ENCODE measurements at regions of chr20 and their contacts with region 1.

Region 1: DNA sequence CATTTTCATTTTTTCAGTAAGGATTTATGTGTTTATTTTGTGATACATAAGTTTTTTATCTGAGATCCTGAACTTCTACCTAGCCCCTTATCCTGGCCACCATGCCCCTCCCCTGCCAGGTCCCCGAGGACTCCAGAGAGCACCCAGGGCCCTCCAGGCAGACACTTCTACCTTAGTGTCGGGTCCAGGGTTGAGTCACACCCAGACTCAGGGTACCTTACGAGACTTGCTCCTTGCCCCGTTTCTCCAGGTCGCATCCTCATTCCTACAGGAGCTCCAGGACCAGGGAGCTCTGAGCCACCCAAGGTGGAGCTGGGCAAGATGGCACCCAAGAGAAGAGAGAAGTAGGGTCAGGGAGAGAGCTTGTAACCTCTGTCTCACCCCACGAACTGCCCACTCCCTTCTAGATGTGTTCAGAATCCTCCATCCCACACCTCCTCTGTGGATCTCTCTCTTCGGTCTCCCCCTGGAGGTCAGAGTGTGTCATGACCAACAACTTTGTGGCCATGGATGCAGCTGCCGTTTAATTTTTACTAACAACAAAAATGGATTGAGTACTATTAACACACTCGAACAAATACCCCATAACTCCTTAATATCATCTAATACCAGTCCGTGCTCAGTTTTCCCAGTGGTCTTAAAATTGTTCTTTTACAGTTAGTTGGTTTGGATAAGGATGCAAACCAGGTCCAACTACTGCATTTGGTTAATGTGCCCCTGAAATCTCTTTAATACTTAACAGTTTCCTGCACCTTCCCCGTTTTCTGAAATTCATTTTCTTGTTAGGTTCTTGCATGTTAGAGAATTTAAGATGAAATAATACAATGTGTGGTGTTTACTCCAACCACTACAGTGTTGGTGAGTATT is 130.6 kb upstream of the INSM1 start:
- DNase-seq: peak; percentile 24 to 51 (median 43)
- H3K4me3 ChIP-seq: no peak overlapping the region
- H3K4me3 Mint-ChIP-seq: no peak overlapping the region
- H3K27ac ChIP-seq: no peak overlapping the region
- H3K27ac Mint-ChIP-seq: no peak overlapping the region
- H3K4me1 ChIP-seq: no peaks in the 10 kb centered on the region
- H3K4me1 Mint-ChIP-seq: peaks cover 4% of the 10 kb centered on the region
- H3K27me3 ChIP-seq: no peaks in the 10 kb centered on the region
- H3K27me3 Mint-ChIP-seq: peaks cover 5 to 7% (median 7%) of the 10 kb centered on the region in 3 donors
- CTCF ChIP-seq: peak; percentile 82

Region 2: DNA sequence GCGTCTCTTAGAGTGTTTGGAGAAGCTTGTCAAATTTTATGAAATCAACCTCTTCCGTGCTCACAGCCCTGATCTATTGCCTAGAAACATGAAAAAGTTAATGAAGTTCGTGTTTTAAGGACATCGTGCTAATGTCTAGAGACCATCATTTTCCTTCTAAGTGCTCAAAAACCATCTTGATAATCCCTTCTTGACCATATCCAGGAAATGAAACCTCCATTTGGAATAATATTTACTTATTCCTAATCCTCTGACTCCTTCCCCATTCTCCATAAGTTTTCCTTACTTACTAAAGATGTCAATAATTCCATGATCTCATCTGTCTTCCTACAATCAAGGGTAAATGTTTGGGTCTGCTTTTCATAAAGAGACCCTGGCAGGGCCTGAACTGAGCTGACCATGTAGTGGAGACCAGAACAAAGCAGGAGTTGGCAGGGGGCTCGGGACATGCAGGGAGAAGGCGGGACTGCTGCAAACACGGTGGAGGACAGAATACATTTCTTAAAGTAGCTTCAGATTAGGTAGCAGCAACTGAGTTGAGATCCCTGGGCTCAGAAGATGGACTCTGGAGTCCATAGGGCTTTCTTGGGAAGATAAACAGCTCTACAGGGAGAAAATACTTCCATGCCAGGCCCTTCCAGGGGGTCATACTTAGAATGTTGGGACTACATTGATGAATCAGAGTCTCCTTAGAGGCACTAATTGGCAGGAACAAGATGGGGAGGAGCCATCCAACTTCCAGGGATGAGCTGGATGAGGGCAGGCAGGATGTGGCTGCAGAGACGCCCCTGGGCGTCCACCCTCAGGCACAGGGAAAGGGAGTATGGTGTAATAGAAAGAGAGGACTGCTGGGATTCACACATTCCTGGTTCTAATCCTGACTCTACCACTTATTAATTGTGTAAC is 378.6 kb before region 1 on chr20:
- intact Hi-C with region 1: no loop called
- DNase-seq: no peak
- H3K4me3 ChIP-seq: no peak overlapping the region
- H3K4me3 Mint-ChIP-seq: no peak overlapping the region
- H3K27ac ChIP-seq: no peak overlapping the region
- H3K27ac Mint-ChIP-seq: no peak overlapping the region
- H3K4me1 ChIP-seq: no peaks in the 10 kb centered on the region
- H3K4me1 Mint-ChIP-seq: peaks cover 7% of the 10 kb centered on the region
- H3K27me3 ChIP-seq: no peaks in the 10 kb centered on the region
- H3K27me3 Mint-ChIP-seq: peaks cover 0 to 6% (median 2%) of the 10 kb centered on the region in 3 donors
- CTCF ChIP-seq: no peak

Region 3: DNA sequence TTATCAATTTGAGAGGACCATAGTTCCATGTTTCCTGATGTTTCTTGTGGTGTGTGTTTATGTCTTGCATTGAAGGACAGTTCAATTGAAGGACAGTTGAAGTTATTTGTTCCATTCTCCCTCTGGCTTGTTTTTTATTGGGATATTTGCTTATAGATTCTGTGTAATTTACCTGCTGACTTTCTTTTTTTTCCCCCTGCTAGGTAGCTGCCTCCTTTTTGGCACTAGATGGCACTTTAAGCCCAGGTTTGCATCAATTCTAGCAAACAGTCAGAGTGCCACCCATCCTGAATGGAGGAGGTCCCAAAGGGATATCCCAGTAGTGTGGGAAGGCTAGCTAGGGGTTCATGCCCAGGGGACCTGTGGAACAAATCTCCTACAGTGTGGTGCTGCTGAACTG is 106.9 kb before region 1 on chr20:
- intact Hi-C with region 1: no loop called
- DNase-seq: no peak
- H3K4me3 ChIP-seq: no peak overlapping the region
- H3K4me3 Mint-ChIP-seq: no peak overlapping the region
- H3K27ac ChIP-seq: no peak overlapping the region
- H3K27ac Mint-ChIP-seq: no peak overlapping the region
- H3K4me1 ChIP-seq: no peaks in the 10 kb centered on the region
- H3K4me1 Mint-ChIP-seq: no peaks in the 10 kb centered on the region
- H3K27me3 ChIP-seq: peaks cover 0 to 2% of the 10 kb centered on the region in 2 donors
- H3K27me3 Mint-ChIP-seq: peaks cover 5 to 10% (median 8%) of the 10 kb centered on the region in 3 donors
- CTCF ChIP-seq: no peak

Region 4: DNA sequence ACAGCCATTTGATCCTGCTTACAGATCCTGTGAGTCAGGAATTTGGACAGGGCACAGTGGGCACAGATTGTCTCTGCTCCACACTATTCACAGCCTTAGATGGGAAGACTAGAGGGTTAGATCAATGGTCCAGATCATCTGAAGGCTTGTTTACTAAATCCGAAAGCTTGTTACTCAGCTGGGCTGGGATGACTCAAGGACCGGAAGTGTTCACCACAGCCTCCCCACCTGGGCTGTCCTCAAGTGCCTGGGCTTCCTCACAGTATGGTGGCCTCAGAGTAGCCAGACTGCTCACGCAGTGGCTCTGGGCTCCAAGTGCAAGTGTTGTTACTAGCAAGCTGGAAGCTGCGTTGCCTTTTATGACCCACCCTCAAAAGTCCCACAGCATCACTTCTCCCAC is 55.1 kb after region 1 on chr20:
- intact Hi-C with region 1: loop called in 1 of 2 experiments (anchors 10 kb)
- DNase-seq: no peak
- H3K4me3 ChIP-seq: no peak overlapping the region
- H3K4me3 Mint-ChIP-seq: no peak overlapping the region
- H3K27ac ChIP-seq: no peak overlapping the region
- H3K27ac Mint-ChIP-seq: peak overlapping the region in 2 of 7 donors; percentile 6 to 11
- H3K4me1 ChIP-seq: peaks cover 6 to 8% of the 10 kb centered on the region in 2 donors
- H3K4me1 Mint-ChIP-seq: peaks cover 10% of the 10 kb centered on the region
- H3K27me3 ChIP-seq: peaks cover 0 to 2% of the 10 kb centered on the region in 2 donors
- H3K27me3 Mint-ChIP-seq: peaks cover 0 to 12% (median 2%) of the 10 kb centered on the region in 3 donors
- CTCF ChIP-seq: no peak

Region 5: DNA sequence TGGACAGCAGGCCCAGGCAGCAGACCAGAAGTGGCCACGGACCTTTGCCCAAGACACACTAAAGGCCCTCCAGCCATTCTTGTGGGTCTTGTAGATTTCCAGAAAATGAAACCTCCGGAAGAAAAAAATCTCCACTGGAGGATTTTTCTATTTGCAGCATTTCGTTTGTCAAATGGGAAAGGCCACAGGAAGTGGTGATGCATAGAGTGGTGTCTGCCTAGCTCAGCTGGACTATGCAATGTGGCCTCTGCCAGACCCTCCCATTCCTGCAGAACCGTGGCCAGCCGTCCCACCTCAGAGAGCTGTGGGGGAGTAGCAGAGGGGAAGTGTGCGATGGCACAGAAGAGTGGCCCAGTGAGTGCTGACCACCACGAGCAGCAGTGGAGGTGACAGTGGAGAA is 106.6 kb after region 1 on chr20:
- intact Hi-C with region 1: loop called in 1 of 2 experiments (anchors 10 kb)
- DNase-seq: no peak
- H3K4me3 ChIP-seq: no peak overlapping the region
- H3K4me3 Mint-ChIP-seq: no peak overlapping the region
- H3K27ac ChIP-seq: no peak overlapping the region
- H3K27ac Mint-ChIP-seq: no peak overlapping the region
- H3K4me1 ChIP-seq: no peaks in the 10 kb centered on the region
- H3K4me1 Mint-ChIP-seq: peaks cover 2% of the 10 kb centered on the region
- H3K27me3 ChIP-seq: no peaks in the 10 kb centered on the region
- H3K27me3 Mint-ChIP-seq: peaks cover 2 to 6% (median 2%) of the 10 kb centered on the region in 3 donors
- CTCF ChIP-seq: no peak

Measured in CD14-positive monocyte (primary cell).